CD4-positive, alpha-beta T cell (primary cell): ENCODE measurements at regions of chr12 and their contacts with region 1.

Region 1: DNA sequence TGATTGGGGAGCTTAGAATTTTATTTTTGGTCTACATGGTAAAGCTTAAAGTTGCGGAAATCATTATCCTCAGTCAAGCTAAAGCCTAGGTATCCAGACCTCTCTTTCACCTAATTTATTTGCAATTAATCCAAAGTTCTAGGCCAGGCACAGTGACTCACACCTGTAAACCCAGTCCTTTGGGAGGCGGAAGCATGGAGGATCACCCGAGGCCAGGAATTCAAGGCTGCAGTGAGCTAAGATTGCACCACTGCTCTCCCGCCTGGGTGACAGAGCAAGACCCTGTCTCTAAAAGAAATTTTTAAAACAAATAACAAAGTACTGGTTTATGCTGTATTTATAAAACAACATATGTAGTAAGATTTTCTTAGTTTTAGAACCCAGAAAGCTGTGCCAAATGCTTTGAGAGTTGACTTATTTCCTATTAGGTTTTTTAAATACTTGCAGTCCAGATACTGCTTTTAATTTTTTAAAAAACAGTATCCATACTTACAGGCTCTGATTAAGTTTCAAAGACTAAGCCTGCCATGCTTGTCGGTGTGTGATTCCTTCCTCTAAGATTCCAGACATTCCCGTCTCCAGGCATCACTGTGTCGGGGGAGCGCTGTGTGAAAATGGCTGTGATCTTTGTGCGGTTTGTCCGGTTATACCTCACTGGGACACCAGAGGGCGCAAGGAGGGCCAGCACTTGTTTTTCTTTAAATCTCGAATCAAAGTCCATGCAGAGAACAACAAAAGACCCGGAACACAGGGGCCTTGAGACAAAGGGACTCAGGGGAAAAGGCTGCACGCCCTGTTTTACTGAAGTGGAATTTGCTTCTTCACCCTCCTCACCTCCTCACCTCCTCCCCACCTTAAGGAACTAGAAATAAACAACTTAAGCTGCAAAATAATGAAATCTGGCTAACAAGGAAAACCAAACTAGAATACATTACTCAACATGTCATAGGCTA is 24.6 kb upstream of the TMPO start:
- DNase-seq: peak; percentile 64 to 91 (median 82)
- ATAC-seq: peak; percentile 97
- H3K4me3 ChIP-seq: no peak overlapping the region
- H3K4me3 Mint-ChIP-seq: no peak overlapping the region
- H3K27ac ChIP-seq: peak overlapping the region in 1 of 2 donors; percentile 31
- H3K27ac Mint-ChIP-seq: peak overlapping the region; percentile 72
- H3K4me1 ChIP-seq: peaks cover 9% of the 10 kb centered on the region
- H3K4me1 Mint-ChIP-seq: peaks cover 6% of the 10 kb centered on the region
- H3K27me3 ChIP-seq: no peaks in the 10 kb centered on the region
- H3K27me3 Mint-ChIP-seq: no peaks in the 10 kb centered on the region
- CTCF ChIP-seq: peak; percentile 85

Region 2: DNA sequence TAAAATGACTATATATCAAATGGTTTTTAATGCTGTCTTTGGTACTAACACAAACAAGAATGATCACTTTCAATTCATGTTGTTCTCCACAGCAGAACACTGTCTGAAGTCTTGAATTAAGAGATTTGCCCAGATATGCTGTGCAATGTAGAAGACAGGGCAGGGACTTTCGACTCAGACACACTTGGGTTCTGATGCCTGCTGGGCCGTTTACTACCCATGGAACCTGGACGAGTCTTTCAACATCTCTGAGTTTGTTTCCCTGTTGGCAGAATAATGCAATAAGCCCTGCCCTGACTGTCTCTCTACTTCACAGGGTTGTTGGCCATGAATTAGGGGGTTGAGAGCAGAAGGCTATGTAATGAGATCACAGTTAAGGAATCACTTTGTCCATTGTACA is 137.9 kb before region 1 on chr12:
- CTCF ChIA-PET with region 1: no interaction called
- POLR2A ChIA-PET with region 1: no interaction called
- intact Hi-C with region 1: no loop called
- DNase-seq: no peak
- ATAC-seq: no peak
- H3K4me3 ChIP-seq: no peak overlapping the region
- H3K4me3 Mint-ChIP-seq: no peak overlapping the region
- H3K27ac ChIP-seq: no peak overlapping the region
- H3K27ac Mint-ChIP-seq: no peak overlapping the region
- H3K4me1 ChIP-seq: no peaks in the 10 kb centered on the region
- H3K4me1 Mint-ChIP-seq: no peaks in the 10 kb centered on the region
- H3K27me3 ChIP-seq: peaks cover 0 to 2% of the 10 kb centered on the region in 2 experiments
- H3K27me3 Mint-ChIP-seq: peaks cover 11% of the 10 kb centered on the region
- CTCF ChIP-seq: no peak

Region 3: GRCh38 chr12:98424726-98425401 is 65.9 kb before region 1 on chr12:
- CTCF ChIA-PET with region 1: no interaction called
- POLR2A ChIA-PET with region 1: no interaction called
- intact Hi-C with region 1: loop called (anchors 2 to 5 kb)
- DNase-seq: peak; percentile 19 to 69 (median 40)
- ATAC-seq: peak; percentile 65
- H3K4me3 ChIP-seq: no peak overlapping the region
- H3K4me3 Mint-ChIP-seq: no peak overlapping the region
- H3K27ac ChIP-seq: no peak overlapping the region
- H3K27ac Mint-ChIP-seq: no peak overlapping the region
- H3K4me1 ChIP-seq: no peaks in the 10 kb centered on the region
- H3K4me1 Mint-ChIP-seq: no peaks in the 10 kb centered on the region
- H3K27me3 ChIP-seq: no peaks in the 10 kb centered on the region
- H3K27me3 Mint-ChIP-seq: no peaks in the 10 kb centered on the region
- CTCF ChIP-seq: peak; percentile 64

Region 4: GRCh38 chr12:98456576-98457573 is 33.9 kb before region 1 on chr12:
- CTCF ChIA-PET with region 1: no interaction called
- POLR2A ChIA-PET with region 1: no interaction called
- intact Hi-C with region 1: no loop called
- DNase-seq: peak in 4 of 14 experiments; percentile 3 to 59 (median 28)
- ATAC-seq: no peak
- H3K4me3 ChIP-seq: peak overlapping the region; percentile 26
- H3K4me3 Mint-ChIP-seq: peak overlapping the region; percentile 43
- H3K27ac ChIP-seq: no peak overlapping the region
- H3K27ac Mint-ChIP-seq: no peak overlapping the region
- H3K4me1 ChIP-seq: peaks cover 7% of the 10 kb centered on the region
- H3K4me1 Mint-ChIP-seq: no peaks in the 10 kb centered on the region
- H3K27me3 ChIP-seq: peaks cover 15 to 25% of the 10 kb centered on the region in 2 experiments
- H3K27me3 Mint-ChIP-seq: peaks cover 38% of the 10 kb centered on the region
- CTCF ChIP-seq: no peak

Region 5: DNA sequence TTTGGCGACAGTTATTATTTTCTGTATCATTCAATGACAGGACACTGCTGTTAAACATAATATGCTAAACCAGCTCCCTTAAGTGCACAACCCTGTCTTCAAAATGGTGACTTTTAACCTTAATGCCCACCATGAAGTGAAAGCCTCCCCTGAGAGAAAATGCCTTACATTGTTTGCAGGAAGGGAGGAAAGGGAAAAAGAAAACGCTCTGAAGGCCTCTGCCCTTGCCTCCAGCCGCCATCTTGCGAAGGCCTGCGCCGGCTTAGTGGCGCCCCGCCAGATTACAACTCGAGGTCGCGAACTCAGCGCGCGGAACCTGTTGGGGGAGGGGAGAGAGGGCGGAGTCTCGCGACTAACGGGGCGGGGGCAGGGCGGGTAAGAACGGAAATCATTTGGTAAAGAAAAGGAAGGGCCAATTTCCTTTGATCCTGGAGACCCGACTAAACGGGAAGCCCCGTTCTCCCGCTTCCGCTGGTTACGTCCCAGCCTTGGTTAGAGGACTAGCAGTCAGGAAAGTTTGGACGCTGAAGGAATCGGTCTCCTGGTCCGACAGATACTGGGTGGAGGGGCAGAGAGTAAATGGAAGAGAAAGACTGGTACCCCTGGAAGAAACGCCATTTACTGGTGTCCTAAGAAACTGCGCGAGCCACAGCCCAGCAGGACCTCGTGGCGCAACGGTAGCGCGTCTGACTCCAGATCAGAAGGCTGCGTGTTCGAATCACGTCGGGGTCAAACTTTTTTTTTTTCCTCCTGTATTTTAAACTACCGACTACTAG is 13.0 kb after region 1 on chr12:
- CTCF ChIA-PET with region 1: interaction called, 9 read pairs
- POLR2A ChIA-PET with region 1: interaction called, 13 read pairs
- intact Hi-C with region 1: loop called in 1 of 2 experiments (anchors 1 kb)
- DNase-seq: peak; percentile 90 to 97 (median 94)
- ATAC-seq: peak; percentile 85
- H3K4me3 ChIP-seq: peak overlapping the region; percentile 95
- H3K4me3 Mint-ChIP-seq: peak overlapping the region; percentile 99
- H3K27ac ChIP-seq: peak overlapping the region; percentile 88 to 97
- H3K27ac Mint-ChIP-seq: peak overlapping the region; percentile 100
- H3K4me1 ChIP-seq: peaks cover 28% of the 10 kb centered on the region
- H3K4me1 Mint-ChIP-seq: peaks cover 34% of the 10 kb centered on the region
- H3K27me3 ChIP-seq: no peaks in the 10 kb centered on the region
- H3K27me3 Mint-ChIP-seq: peaks cover 18% of the 10 kb centered on the region
- CTCF ChIP-seq: no peak

Region 6: DNA sequence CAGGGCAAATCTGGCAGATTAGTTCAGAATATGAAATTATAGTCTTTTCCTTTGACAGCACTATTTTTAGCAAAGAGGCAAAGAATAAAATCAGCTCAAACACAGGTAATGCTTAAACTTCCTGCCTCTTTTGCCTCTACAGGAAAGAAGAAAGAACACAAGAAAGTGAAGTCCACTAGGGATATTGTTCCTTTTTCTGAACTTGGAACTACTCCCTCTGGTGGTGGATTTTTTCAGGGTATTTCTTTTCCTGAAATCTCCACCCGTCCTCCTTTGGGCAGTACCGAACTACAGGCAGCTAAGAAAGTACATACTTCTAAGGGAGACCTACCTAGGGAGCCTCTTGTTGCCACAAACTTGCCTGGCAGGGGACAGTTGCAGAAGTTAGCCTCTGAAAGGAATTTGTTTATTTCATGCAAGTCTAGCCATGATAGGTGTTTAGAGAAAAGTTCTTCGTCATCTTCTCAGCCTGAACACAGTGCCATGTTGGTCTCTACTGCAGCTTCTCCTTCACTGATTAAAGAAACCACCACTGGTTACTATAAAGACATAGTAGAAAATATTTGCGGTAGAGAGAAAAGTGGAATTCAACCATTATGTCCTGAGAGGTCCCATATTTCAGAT is 42.0 kb after region 1 on chr12:
- CTCF ChIA-PET with region 1: interaction called, 6 read pairs
- POLR2A ChIA-PET with region 1: interaction called, 4 read pairs
- intact Hi-C with region 1: loop called (anchors 5 kb)
- DNase-seq: peak in 3 of 14 experiments; percentile 60 to 72 (median 70)
- ATAC-seq: peak; percentile 60
- H3K4me3 ChIP-seq: no peak overlapping the region
- H3K4me3 Mint-ChIP-seq: no peak overlapping the region
- H3K27ac ChIP-seq: no peak overlapping the region
- H3K27ac Mint-ChIP-seq: peak overlapping the region; percentile 15
- H3K4me1 ChIP-seq: no peaks in the 10 kb centered on the region
- H3K4me1 Mint-ChIP-seq: peaks cover 22% of the 10 kb centered on the region
- H3K27me3 ChIP-seq: no peaks in the 10 kb centered on the region
- H3K27me3 Mint-ChIP-seq: no peaks in the 10 kb centered on the region
- CTCF ChIP-seq: peak; percentile 75

Region 7: DNA sequence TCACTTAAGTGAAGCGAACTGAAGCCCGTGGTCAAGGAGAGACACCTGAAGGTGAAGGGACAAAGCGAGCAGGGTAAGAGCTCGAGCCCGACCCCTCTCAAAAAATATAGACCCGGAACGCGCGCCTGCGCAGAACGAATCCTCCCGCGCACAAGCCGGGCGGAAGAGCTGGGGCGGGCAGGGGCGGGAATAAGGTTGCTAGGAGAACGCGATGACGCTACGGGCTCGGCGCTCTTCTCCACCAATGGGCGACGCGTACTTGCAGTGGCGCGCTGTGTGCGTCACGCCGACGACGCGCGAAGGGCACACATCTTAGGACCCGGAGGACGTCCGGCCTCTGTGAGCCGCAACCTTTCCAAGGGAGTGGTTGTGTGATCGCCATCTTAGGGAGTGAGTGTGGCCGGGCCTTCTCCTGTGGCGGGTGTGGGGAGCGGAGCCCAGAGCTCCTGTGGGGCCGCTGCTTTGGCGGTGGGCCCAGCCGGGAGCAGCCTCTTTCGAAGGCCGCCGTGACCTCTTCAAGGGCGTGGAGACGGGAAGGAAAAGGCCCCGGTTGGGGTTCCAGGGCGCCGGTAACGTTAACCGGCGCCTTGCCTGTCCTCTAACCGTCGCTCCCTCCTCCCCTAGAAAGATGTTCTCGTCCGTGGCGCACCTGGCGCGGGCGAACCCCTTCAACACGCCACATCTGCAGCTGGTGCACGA is 102.7 kb after region 1 on chr12 and contains the start of gene SLC25A3:
- CTCF ChIA-PET with region 1: no interaction called
- POLR2A ChIA-PET with region 1: interaction called, 13 read pairs
- intact Hi-C with region 1: loop called in 1 of 2 experiments (anchors 2 kb)
- DNase-seq: peak; percentile 91 to 99 (median 94)
- ATAC-seq: peak; percentile 94
- H3K4me3 ChIP-seq: peak within 1 kb of the TSS; percentile 97
- H3K4me3 Mint-ChIP-seq: peak within 1 kb of the TSS; percentile 95
- H3K27ac ChIP-seq: peak within 1 kb of the TSS; percentile 90 to 98
- H3K27ac Mint-ChIP-seq: peak within 1 kb of the TSS; percentile 93
- H3K4me1 ChIP-seq: peaks cover 22% of the 10 kb centered on the region
- H3K4me1 Mint-ChIP-seq: peaks cover 38% of the 10 kb centered on the region
- H3K27me3 ChIP-seq: no peaks in the 10 kb centered on the region
- H3K27me3 Mint-ChIP-seq: no peaks in the 10 kb centered on the region
- CTCF ChIP-seq: no peak
- total RNA-seq, gene SLC25A3: 602 to 615 TPM

Region 8: DNA sequence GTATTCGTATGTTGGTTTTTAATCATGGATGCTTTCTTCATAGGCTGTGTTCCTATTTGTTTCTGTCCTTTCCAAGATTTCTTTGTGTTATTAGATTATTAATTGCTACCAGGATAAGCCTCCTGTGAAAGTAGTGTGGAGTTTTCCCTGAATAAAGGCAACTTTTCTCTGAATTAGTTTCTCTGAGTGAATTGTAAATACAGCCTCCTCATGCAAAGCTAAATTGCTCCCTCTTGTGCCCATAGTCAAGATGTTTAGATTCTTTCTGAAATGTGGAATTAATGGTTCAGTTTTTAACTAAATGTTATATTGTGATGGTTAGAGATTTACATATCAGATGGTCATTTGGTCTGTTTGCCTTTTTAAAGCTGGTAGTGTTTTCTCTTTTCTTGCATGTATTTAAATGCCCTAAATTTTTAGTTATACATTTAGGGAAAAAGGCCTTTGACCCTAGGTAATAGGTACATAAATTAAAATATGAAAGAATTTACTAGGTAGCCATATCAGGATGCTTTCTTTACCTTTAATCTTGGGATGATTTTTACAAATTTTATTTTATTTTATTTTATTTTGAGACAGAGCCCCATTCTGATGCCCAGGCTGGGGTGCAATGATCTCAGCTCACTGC is 163.2 kb after region 1 on chr12:
- CTCF ChIA-PET with region 1: interaction called, 3 read pairs
- POLR2A ChIA-PET with region 1: no interaction called
- intact Hi-C with region 1: loop called in 1 of 2 experiments (anchors 2 kb)
- DNase-seq: peak in 4 of 14 experiments; percentile 11 to 74 (median 71)
- ATAC-seq: peak; percentile 55
- H3K4me3 ChIP-seq: no peak overlapping the region
- H3K4me3 Mint-ChIP-seq: no peak overlapping the region
- H3K27ac ChIP-seq: no peak overlapping the region
- H3K27ac Mint-ChIP-seq: no peak overlapping the region
- H3K4me1 ChIP-seq: no peaks in the 10 kb centered on the region
- H3K4me1 Mint-ChIP-seq: peaks cover 16% of the 10 kb centered on the region
- H3K27me3 ChIP-seq: no peaks in the 10 kb centered on the region
- H3K27me3 Mint-ChIP-seq: no peaks in the 10 kb centered on the region
- CTCF ChIP-seq: peak; percentile 76